ENCODE measurements at regions of chrX and their contacts with region 1.

Region 1: GRCh38 chrX:74382613-74383012 is 38.7 kb upstream of the SLC16A2 start:
- DNase-seq: peak; percentile 10
- H3K4me3 ChIP-seq: no peak overlapping the region
- H3K27ac ChIP-seq: no peak overlapping the region
- H3K27me3 ChIP-seq: no peaks in the 10 kb centered on the region
- CTCF ChIP-seq: peak; percentile 82

Region 2: GRCh38 chrX:74325130-74326059 is 57.2 kb before region 1 on chrX:
- CTCF ChIA-PET with region 1: no interaction called
- POLR2A ChIA-PET with region 1: no interaction called
- DNase-seq: no peak
- H3K4me3 ChIP-seq: no peak overlapping the region
- H3K27ac ChIP-seq: no peak overlapping the region
- H3K27me3 ChIP-seq: peaks cover under 1% of the 10 kb centered on the region
- CTCF ChIP-seq: no peak

Region 3: GRCh38 chrX:74421036-74421739 is 38.6 kb after region 1 on chrX and contains the start of gene SLC16A2:
- CTCF ChIA-PET with region 1: interaction called, 13 read pairs
- POLR2A ChIA-PET with region 1: no interaction called
- DNase-seq: peak; percentile 49
- H3K4me3 ChIP-seq: peak within 1 kb of the TSS; percentile 68
- H3K27ac ChIP-seq: peak within 1 kb of the TSS; percentile 87
- H3K27me3 ChIP-seq: no peaks in the 10 kb centered on the region
- CTCF ChIP-seq: no peak
- polyA plus RNA-seq, gene SLC16A2: 38.5 and 42.6 TPM in 2 replicates

Region 4: DNA sequence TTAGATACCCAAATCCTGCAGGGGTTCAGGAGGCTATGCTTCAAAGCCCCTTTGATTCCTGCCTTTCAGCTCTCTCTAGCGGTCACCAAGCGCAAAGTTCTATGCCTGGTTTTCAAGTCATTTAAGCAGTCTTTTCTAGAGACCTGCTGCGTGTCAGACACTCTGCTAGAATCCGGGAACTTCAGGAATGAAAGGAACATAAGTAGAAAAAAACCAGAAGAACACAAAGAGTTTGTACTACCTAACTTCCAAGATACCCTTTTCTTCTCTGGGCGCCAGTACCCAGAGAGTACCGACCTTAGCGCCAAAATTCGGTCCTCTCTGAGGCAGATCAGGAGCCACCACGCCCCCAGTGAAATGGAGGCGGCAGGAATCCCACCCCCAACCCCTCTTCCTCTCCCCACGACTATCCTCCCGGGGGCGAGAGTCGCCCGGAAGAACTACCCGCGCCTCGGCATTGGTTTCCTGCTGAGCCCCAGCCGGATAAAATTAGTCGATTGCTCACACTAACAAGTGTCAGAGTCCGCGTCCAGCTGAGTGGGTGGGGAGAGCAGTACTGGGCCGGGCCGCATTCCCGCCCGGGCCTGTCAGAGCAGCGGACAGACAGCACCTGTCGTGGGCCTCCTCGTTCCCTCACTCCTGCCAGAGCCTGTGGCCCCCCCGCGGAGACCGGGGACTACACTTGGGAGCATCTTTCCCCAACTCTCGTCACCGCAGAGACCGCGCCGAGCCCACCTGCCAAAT is 153.0 kb after region 1 on chrX:
- CTCF ChIA-PET with region 1: interaction called, 15 read pairs
- POLR2A ChIA-PET with region 1: no interaction called
- DNase-seq: no peak
- H3K4me3 ChIP-seq: peak overlapping the region; percentile 54
- H3K27ac ChIP-seq: peak overlapping the region; percentile 89
- H3K27me3 ChIP-seq: no peaks in the 10 kb centered on the region
- CTCF ChIP-seq: peak; percentile 52

Measured in AG04450 (cell line).